Body of pancreas (tissue), 4 donors: ENCODE measurements at regions of chr10 and their contacts with region 1.

Region 1: GRCh38 chr10:51083356-51083853 is 9.1 kb downstream of the PRKG1 start:
- DNase-seq: no peak
- ATAC-seq: no peak
- H3K4me3 ChIP-seq: no peak overlapping the region
- H3K27ac ChIP-seq: no peak overlapping the region
- H3K4me1 ChIP-seq: no peaks in the 10 kb centered on the region
- H3K27me3 ChIP-seq: no peaks in the 10 kb centered on the region
- CTCF ChIP-seq: no peak
- POLR2A ChIP-seq: no peak

Region 2: DNA sequence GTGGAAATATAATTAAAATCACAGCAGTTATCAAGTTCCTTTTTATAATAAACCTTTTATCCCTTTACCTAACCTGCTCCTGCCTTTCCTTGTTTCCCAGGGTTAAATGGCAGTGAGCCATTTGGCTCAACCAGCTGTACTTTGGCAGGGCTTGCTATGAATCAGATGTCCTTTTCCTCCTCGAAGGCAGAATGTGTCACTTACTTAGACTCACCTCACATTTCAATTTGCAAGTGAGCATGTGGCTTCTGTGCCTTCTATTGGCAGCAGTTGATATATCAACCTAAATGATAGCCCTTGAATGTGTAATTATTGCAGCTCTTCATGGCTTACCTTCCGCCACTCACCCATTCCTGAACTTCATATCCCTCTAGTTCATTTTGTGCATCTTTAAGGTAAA is 314.3 kb after region 1 on chr10:
- intact Hi-C with region 1: no loop called
- DNase-seq: peak; percentile 80 to 86 (median 85)
- ATAC-seq: peak; percentile 98
- H3K4me3 ChIP-seq: no peak overlapping the region
- H3K27ac ChIP-seq: peak overlapping the region in 2 of 4 donors; percentile 26 to 45
- H3K4me1 ChIP-seq: peaks cover 12% of the 10 kb centered on the region
- H3K27me3 ChIP-seq: no peaks in the 10 kb centered on the region
- CTCF ChIP-seq: peak in 2 of 7 experiments; percentile 15 to 20
- POLR2A ChIP-seq: no peak

Region 3: GRCh38 chr10:51422311-51423120 is 339.1 kb after region 1 on chr10:
- intact Hi-C with region 1: loop called (anchors 10 kb)
- DNase-seq: peak; percentile 68 to 75 (median 72)
- ATAC-seq: peak; percentile 93
- H3K4me3 ChIP-seq: no peak overlapping the region
- H3K27ac ChIP-seq: no peak overlapping the region
- H3K4me1 ChIP-seq: peaks cover 7% of the 10 kb centered on the region
- H3K27me3 ChIP-seq: no peaks in the 10 kb centered on the region
- CTCF ChIP-seq: peak; percentile 53 to 83 (median 80)
- POLR2A ChIP-seq: no peak